ENCODE measurements at regions of chr13 and their contacts with region 1.

Region 1: GRCh38 chr13:76886292-76887075 is at the start of gene KCTD12:
- DNase-seq: peak; percentile 90
- ATAC-seq: peak; percentile 79
- H3K4me3 ChIP-seq: peak within 1 kb of the TSS; percentile 45 to 67 (median 64)
- H3K4me3 Mint-ChIP-seq: peak within 1 kb of the TSS; percentile 96
- H3K27ac ChIP-seq: peak within 1 kb of the TSS in 1 of 2 donors; percentile 40
- H3K27ac Mint-ChIP-seq: peak within 1 kb of the TSS; percentile 88
- H3K4me1 ChIP-seq: peaks cover 7 to 24% of the 10 kb centered on the region in 2 donors
- H3K4me1 Mint-ChIP-seq: peaks cover 28% of the 10 kb centered on the region
- H3K27me3 ChIP-seq: peaks cover 0 to 3% (median 0%) of the 10 kb centered on the region in 4 experiments
- H3K27me3 Mint-ChIP-seq: peaks cover 3% of the 10 kb centered on the region
- CTCF ChIP-seq: peak; percentile 41
- total RNA-seq, gene KCTD12: 6.2 TPM in 2 replicates

Region 2: GRCh38 chr13:75549262-75550158 is 1337.0 kb before region 1 on chr13 and contains the start of gene UCHL3:
- CTCF ChIA-PET with region 1: no interaction called
- POLR2A ChIA-PET with region 1: no interaction called
- intact Hi-C with region 1: loop called (anchors 1 kb)
- DNase-seq: peak; percentile 98
- ATAC-seq: peak; percentile 92
- H3K4me3 ChIP-seq: peak within 1 kb of the TSS; percentile 67 to 96 (median 93)
- H3K4me3 Mint-ChIP-seq: peak within 1 kb of the TSS; percentile 95
- H3K27ac ChIP-seq: peak within 1 kb of the TSS; percentile 81 to 92
- H3K27ac Mint-ChIP-seq: peak within 1 kb of the TSS; percentile 99
- H3K4me1 ChIP-seq: peaks cover 13 to 14% of the 10 kb centered on the region in 2 donors
- H3K4me1 Mint-ChIP-seq: peaks cover 30% of the 10 kb centered on the region
- H3K27me3 ChIP-seq: no peaks in the 10 kb centered on the region
- H3K27me3 Mint-ChIP-seq: no peaks in the 10 kb centered on the region
- CTCF ChIP-seq: peak; percentile 89
- total RNA-seq, gene UCHL3: 13.5 and 16.8 TPM in 2 replicates

Region 3: DNA sequence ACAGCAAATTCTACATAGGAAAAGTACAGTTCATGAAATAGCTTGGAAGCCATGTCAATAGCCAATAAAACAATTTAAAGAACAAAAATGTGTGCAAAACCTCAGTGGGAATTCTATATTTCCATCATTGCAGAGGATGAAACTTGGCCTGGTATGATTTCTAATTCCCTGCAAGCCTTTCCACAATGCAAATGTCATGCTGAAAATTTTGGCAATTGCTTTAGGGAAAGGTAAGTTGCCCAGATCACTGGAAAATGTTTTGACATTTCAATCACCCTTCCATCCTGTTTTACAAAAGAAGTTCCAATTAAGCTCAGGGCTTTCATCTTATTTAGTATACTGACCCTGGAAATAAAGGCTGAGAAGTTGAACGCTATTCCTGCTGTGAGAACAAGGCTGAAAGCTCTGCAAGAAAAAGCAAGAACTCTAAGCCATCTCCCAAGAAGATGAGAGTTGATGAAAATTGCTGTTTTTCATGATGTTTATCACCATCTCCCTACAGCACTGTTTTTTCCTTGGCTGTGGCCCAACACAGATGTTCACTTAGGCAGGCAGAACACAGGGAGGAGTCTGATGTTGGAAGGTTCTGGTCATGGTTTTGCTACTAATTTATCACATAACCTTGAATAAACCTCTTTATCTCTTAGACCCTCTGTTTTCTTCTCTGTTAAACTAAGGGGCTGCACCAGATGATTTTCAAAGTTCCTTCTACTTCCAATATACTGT is 264.0 kb before region 1 on chr13:
- CTCF ChIA-PET with region 1: no interaction called
- POLR2A ChIA-PET with region 1: no interaction called
- intact Hi-C with region 1: no loop called
- DNase-seq: no peak
- ATAC-seq: no peak
- H3K4me3 ChIP-seq: no peak overlapping the region
- H3K4me3 Mint-ChIP-seq: no peak overlapping the region
- H3K27ac ChIP-seq: no peak overlapping the region
- H3K27ac Mint-ChIP-seq: no peak overlapping the region
- H3K4me1 ChIP-seq: no peaks in the 10 kb centered on the region
- H3K4me1 Mint-ChIP-seq: no peaks in the 10 kb centered on the region
- H3K27me3 ChIP-seq: peaks cover 0 to 4% (median 0%) of the 10 kb centered on the region in 4 experiments
- H3K27me3 Mint-ChIP-seq: peaks cover 10% of the 10 kb centered on the region
- CTCF ChIP-seq: no peak

Region 4: GRCh38 chr13:76822698-76823267 is 63.7 kb before region 1 on chr13:
- CTCF ChIA-PET with region 1: interaction called, 11 read pairs
- POLR2A ChIA-PET with region 1: no interaction called
- intact Hi-C with region 1: no loop called
- DNase-seq: no peak
- ATAC-seq: peak; percentile 33
- H3K4me3 ChIP-seq: no peak overlapping the region
- H3K4me3 Mint-ChIP-seq: no peak overlapping the region
- H3K27ac ChIP-seq: no peak overlapping the region
- H3K27ac Mint-ChIP-seq: no peak overlapping the region
- H3K4me1 ChIP-seq: no peaks in the 10 kb centered on the region
- H3K4me1 Mint-ChIP-seq: no peaks in the 10 kb centered on the region
- H3K27me3 ChIP-seq: no peaks in the 10 kb centered on the region
- H3K27me3 Mint-ChIP-seq: peaks cover 8% of the 10 kb centered on the region
- CTCF ChIP-seq: no peak

Region 5: DNA sequence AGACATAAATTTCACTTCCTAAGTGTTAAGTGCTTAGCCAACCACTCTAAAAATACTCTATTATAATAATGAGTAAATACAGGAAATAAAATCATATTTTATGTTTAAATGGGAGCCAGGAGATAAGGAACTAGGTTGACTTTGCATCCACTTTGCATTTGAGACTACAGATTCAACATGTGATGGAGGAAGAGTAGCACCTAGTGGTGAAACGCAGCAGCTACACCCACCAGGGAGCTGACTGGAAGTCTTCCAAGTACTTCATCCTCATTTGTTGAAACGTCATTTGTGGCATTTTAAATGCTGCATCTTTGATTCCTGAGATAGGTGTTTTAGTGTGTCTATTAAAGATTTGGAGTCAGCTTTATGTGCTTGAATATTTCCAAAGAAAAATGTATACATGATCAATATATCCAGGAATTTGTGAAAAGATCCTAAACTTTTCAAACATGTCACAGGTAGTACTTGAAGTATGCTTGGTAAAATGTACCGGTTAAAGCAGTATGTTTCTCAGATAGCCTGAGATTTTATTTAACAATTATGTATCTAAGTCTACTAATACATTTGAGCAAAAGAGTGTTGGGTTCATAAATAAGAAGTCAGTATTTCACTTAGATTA is 17.2 kb after region 1 on chr13:
- CTCF ChIA-PET with region 1: interaction called, 26 read pairs
- POLR2A ChIA-PET with region 1: no interaction called
- intact Hi-C with region 1: loop called (anchors 1 kb)
- DNase-seq: peak; percentile 76
- ATAC-seq: peak; percentile 85
- H3K4me3 ChIP-seq: no peak overlapping the region
- H3K4me3 Mint-ChIP-seq: no peak overlapping the region
- H3K27ac ChIP-seq: no peak overlapping the region
- H3K27ac Mint-ChIP-seq: no peak overlapping the region
- H3K4me1 ChIP-seq: no peaks in the 10 kb centered on the region
- H3K4me1 Mint-ChIP-seq: no peaks in the 10 kb centered on the region
- H3K27me3 ChIP-seq: peaks cover 0 to 9% (median 0%) of the 10 kb centered on the region in 4 experiments
- H3K27me3 Mint-ChIP-seq: peaks cover 24% of the 10 kb centered on the region
- CTCF ChIP-seq: peak; percentile 100

Region 6: DNA sequence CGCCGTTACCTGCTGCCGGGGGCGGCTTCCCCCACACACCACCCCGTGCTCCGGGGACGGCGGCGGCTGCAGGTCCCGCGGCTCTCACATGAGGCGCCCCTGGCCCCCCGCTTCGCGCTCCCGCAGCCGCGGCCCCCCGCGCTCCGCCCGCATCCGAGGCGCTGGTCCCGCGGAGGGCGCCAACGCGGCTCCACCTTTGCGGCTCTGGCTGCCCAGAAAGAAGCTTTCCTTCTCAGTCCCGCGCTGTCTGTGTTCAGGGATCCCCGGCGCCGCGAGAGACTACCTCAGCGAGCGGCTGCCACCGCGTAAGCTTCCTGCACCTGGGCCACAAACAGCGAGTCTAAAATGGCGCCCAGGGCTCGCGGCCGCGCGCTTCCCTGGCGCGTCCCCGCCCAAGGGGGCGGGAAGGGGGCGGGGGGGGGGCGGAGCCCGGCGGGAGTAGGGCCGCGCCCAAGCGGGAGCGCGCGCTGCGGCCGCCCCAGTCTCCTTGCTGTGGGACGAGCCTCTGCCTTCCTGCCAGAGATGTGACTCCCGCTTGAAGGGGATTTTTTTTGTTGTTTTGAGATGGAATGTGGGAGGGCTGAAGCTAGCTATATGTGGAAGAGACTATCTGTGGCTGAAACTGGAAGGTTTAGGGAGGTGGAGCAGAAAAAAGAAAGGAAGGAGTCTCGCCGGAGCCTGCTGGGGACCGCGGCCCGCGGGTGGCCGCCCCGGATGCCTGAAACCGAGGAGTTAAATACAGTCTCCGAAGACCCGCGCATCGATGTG is 140.5 kb after region 1 on chr13 and contains the start of gene FBXL3:
- CTCF ChIA-PET with region 1: no interaction called
- POLR2A ChIA-PET with region 1: no interaction called
- intact Hi-C with region 1: loop called (anchors 1 kb)
- DNase-seq: peak; percentile 91
- ATAC-seq: peak; percentile 64
- H3K4me3 ChIP-seq: peak within 1 kb of the TSS; percentile 66 to 91 (median 88)
- H3K4me3 Mint-ChIP-seq: peak within 1 kb of the TSS; percentile 99
- H3K27ac ChIP-seq: peak within 1 kb of the TSS; percentile 84 to 95
- H3K27ac Mint-ChIP-seq: peak within 1 kb of the TSS; percentile 98
- H3K4me1 ChIP-seq: peaks cover 26 to 42% of the 10 kb centered on the region in 2 donors
- H3K4me1 Mint-ChIP-seq: peaks cover 49% of the 10 kb centered on the region
- H3K27me3 ChIP-seq: no peaks in the 10 kb centered on the region
- H3K27me3 Mint-ChIP-seq: no peaks in the 10 kb centered on the region
- CTCF ChIP-seq: no peak
- total RNA-seq, gene FBXL3: 78.0 and 79.5 TPM in 2 replicates

Measured in B cell (primary cell).